ENCODE measurements at regions of chr1 and their contacts with region 1.

Region 1: GRCh38 chr1:64136752-64137411 is 66.5 kb upstream of the UBE2U start:
- DNase-seq: peak; percentile 69
- H3K4me3 Mint-ChIP-seq: no peak overlapping the region
- H3K27ac Mint-ChIP-seq: no peak overlapping the region
- H3K4me1 Mint-ChIP-seq: no peaks in the 10 kb centered on the region
- H3K27me3 Mint-ChIP-seq: peaks cover 4% of the 10 kb centered on the region

Region 2: GRCh38 chr1:63615768-63616420 is 521.0 kb before region 1 on chr1:
- CTCF ChIA-PET with region 1: interaction called, 23 read pairs
- POLR2A ChIA-PET with region 1: no interaction called
- DNase-seq: peak; percentile 52
- H3K4me3 Mint-ChIP-seq: no peak overlapping the region
- H3K27ac Mint-ChIP-seq: no peak overlapping the region
- H3K4me1 Mint-ChIP-seq: no peaks in the 10 kb centered on the region
- H3K27me3 Mint-ChIP-seq: no peaks in the 10 kb centered on the region

Region 3: GRCh38 chr1:64246294-64246917 is 109.5 kb after region 1 on chr1:
- CTCF ChIA-PET with region 1: interaction called, 10 read pairs
- POLR2A ChIA-PET with region 1: no interaction called
- DNase-seq: no peak
- H3K4me3 Mint-ChIP-seq: no peak overlapping the region
- H3K27ac Mint-ChIP-seq: no peak overlapping the region
- H3K4me1 Mint-ChIP-seq: peaks cover 13% of the 10 kb centered on the region
- H3K27me3 Mint-ChIP-seq: peaks cover 21% of the 10 kb centered on the region